CD8-positive, alpha-beta T cell (primary cell): ENCODE measurements at regions of chr10 and their contacts with region 1.

Region 1: DNA sequence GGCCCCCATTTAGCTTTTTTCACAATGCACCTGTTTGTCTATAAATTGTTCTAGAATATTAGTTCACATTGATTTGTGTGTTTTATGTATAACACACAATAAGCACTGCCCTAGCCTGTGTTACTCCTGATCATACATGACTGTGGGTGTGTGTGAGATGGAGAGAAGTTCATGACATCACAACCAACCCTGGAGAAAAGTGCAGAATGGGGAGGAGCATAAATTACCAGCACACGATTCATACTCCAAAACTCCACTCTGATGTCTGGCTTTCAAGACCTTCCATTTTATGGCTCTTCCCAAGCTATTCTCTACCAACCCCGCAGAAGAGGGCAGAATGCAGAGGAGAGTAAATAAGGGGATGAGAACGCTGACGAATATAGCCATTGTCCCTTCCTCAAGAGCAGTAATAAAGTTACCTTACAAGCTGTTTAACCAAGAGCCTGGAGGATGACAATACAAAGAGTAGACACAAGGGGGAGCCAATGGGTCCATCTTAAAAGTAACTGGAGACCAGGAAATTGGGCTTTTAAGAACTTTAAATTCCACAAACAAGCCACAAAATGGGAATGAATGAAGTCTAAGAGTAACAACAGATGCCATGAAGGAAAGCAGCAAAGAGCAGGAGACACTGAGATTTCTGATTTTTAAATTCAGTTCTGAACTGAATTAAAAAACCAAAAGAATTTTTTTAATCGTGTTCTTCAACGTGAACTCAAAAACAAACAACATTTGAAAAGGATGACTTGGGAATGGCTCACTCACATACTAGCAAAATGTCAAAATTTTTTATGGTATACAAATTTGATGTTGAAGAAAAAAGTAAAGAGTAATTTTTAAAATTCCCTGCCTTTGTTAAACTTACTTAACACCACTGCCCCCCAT is 159.6 kb downstream of the PARD3 start:
- DNase-seq: peak in 2 of 9 experiments; percentile 26 to 40
- ATAC-seq: no peak
- H3K4me3 ChIP-seq: no peak overlapping the region
- H3K4me3 Mint-ChIP-seq: no peak overlapping the region
- H3K27ac ChIP-seq: no peak overlapping the region
- H3K27ac Mint-ChIP-seq: no peak overlapping the region
- H3K4me1 ChIP-seq: no peaks in the 10 kb centered on the region
- H3K4me1 Mint-ChIP-seq: no peaks in the 10 kb centered on the region
- H3K27me3 ChIP-seq: no peaks in the 10 kb centered on the region
- H3K27me3 Mint-ChIP-seq: peaks cover 4% of the 10 kb centered on the region
- CTCF ChIP-seq: peak; percentile 42

Region 2: DNA sequence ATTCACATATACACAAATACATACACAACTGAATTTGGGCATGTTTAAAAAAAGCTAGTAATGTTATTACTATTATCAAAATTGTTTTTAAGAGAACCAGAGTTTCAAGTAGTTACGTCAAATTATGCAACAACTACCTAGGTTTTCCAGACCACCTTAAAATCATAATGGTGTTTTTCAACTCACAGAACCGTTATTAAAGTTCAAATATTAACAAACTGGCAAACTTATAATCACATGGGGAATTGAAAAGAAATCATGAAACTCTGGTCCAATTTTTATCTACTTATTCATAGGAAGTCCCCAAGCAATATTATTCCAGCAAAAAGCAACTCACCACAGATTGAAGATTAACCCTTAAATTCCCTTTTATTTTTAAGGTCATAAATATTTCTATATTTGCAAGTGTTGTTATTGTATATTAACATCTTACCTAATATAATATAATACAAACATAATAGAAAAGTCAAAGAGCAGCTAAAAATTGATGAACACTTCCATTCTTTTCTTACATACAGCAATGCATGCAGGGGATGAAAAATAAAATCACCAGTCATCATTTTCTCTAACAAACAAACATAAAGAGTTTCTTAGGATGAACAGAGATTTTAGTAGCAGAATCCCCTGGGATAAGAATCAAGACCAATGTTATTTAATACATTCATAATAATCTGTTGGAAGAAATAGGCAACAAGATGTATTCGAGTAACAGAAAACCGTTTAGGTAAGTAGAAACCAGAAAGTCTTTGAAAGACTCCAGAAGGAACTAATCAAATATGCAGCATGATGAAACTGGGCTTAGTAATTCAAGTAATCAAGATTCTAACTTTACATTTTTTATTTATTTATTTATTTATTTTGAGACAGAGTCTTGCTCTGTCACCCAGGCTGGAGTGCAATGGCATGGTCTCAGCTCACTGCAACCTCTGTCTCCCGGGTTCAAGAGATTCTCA is 231.6 kb before region 1 on chr10:
- CTCF ChIA-PET with region 1: no interaction called
- POLR2A ChIA-PET with region 1: no interaction called
- intact Hi-C with region 1: no loop called
- DNase-seq: no peak
- ATAC-seq: no peak
- H3K4me3 ChIP-seq: no peak overlapping the region
- H3K4me3 Mint-ChIP-seq: no peak overlapping the region
- H3K27ac ChIP-seq: no peak overlapping the region
- H3K27ac Mint-ChIP-seq: no peak overlapping the region
- H3K4me1 ChIP-seq: no peaks in the 10 kb centered on the region
- H3K4me1 Mint-ChIP-seq: no peaks in the 10 kb centered on the region
- H3K27me3 ChIP-seq: no peaks in the 10 kb centered on the region
- H3K27me3 Mint-ChIP-seq: no peaks in the 10 kb centered on the region
- CTCF ChIP-seq: no peak

Region 3: GRCh38 chr10:34690383-34691049 is 35.0 kb after region 1 on chr10:
- CTCF ChIA-PET with region 1: no interaction called
- POLR2A ChIA-PET with region 1: no interaction called
- intact Hi-C with region 1: no loop called
- DNase-seq: no peak
- ATAC-seq: no peak
- H3K4me3 ChIP-seq: no peak overlapping the region
- H3K4me3 Mint-ChIP-seq: no peak overlapping the region
- H3K27ac ChIP-seq: no peak overlapping the region
- H3K27ac Mint-ChIP-seq: no peak overlapping the region
- H3K4me1 ChIP-seq: no peaks in the 10 kb centered on the region
- H3K4me1 Mint-ChIP-seq: no peaks in the 10 kb centered on the region
- H3K27me3 ChIP-seq: peaks cover 0 to 3% of the 10 kb centered on the region in 2 experiments
- H3K27me3 Mint-ChIP-seq: no peaks in the 10 kb centered on the region
- CTCF ChIP-seq: no peak

Region 4: GRCh38 chr10:34702093-34702937 is 46.8 kb after region 1 on chr10:
- CTCF ChIA-PET with region 1: no interaction called
- POLR2A ChIA-PET with region 1: no interaction called
- intact Hi-C with region 1: no loop called
- DNase-seq: no peak
- ATAC-seq: no peak
- H3K4me3 ChIP-seq: no peak overlapping the region
- H3K4me3 Mint-ChIP-seq: no peak overlapping the region
- H3K27ac ChIP-seq: no peak overlapping the region
- H3K27ac Mint-ChIP-seq: no peak overlapping the region
- H3K4me1 ChIP-seq: no peaks in the 10 kb centered on the region
- H3K4me1 Mint-ChIP-seq: peaks cover 5% of the 10 kb centered on the region
- H3K27me3 ChIP-seq: no peaks in the 10 kb centered on the region
- H3K27me3 Mint-ChIP-seq: peaks cover 5% of the 10 kb centered on the region
- CTCF ChIP-seq: no peak

Region 5: GRCh38 chr10:35225204-35225603 is 569.7 kb after region 1 on chr10:
- CTCF ChIA-PET with region 1: no interaction called
- POLR2A ChIA-PET with region 1: no interaction called
- intact Hi-C with region 1: loop called in 1 of 2 experiments (anchors 10 kb)
- DNase-seq: peak in 1 of 9 experiments; percentile 48
- ATAC-seq: peak; percentile 23
- H3K4me3 ChIP-seq: no peak overlapping the region
- H3K4me3 Mint-ChIP-seq: no peak overlapping the region
- H3K27ac ChIP-seq: no peak overlapping the region
- H3K27ac Mint-ChIP-seq: no peak overlapping the region
- H3K4me1 ChIP-seq: no peaks in the 10 kb centered on the region
- H3K4me1 Mint-ChIP-seq: no peaks in the 10 kb centered on the region
- H3K27me3 ChIP-seq: no peaks in the 10 kb centered on the region
- H3K27me3 Mint-ChIP-seq: no peaks in the 10 kb centered on the region
- CTCF ChIP-seq: no peak